Transverse colon (tissue), 4 donors: ENCODE measurements at regions of chr18 and their contacts with region 1.

Region 1: GRCh38 chr18:56823986-56824565 is 172.9 kb downstream of the WDR7 start:
- DNase-seq: no peak
- H3K4me3 ChIP-seq: no peak overlapping the region
- H3K27ac ChIP-seq: no peak overlapping the region
- H3K4me1 ChIP-seq: no peaks in the 10 kb centered on the region
- H3K27me3 ChIP-seq: no peaks in the 10 kb centered on the region
- CTCF ChIP-seq: no peak
- EP300 ChIP-seq: no peak
- POLR2A ChIP-seq: no peak

Region 2: GRCh38 chr18:56851774-56852173 is 27.7 kb after region 1 on chr18:
- in situ Hi-C with region 1: no loop called
- intact Hi-C with region 1: loop called (anchors 1 kb)
- DNase-seq: no peak
- H3K4me3 ChIP-seq: no peak overlapping the region
- H3K27ac ChIP-seq: no peak overlapping the region
- H3K4me1 ChIP-seq: no peaks in the 10 kb centered on the region
- H3K27me3 ChIP-seq: no peaks in the 10 kb centered on the region
- CTCF ChIP-seq: no peak
- EP300 ChIP-seq: no peak
- POLR2A ChIP-seq: no peak